Activated CD4-positive, alpha-beta T cell treated with anti-CD3 and anti-CD28 coated beads, Interleukin-2, amount 10 ng/mL, durations not matched to agents 24 days and 14 days (primary cell): ENCODE measurements at regions of chr10 and their contacts with region 1.

Region 1: DNA sequence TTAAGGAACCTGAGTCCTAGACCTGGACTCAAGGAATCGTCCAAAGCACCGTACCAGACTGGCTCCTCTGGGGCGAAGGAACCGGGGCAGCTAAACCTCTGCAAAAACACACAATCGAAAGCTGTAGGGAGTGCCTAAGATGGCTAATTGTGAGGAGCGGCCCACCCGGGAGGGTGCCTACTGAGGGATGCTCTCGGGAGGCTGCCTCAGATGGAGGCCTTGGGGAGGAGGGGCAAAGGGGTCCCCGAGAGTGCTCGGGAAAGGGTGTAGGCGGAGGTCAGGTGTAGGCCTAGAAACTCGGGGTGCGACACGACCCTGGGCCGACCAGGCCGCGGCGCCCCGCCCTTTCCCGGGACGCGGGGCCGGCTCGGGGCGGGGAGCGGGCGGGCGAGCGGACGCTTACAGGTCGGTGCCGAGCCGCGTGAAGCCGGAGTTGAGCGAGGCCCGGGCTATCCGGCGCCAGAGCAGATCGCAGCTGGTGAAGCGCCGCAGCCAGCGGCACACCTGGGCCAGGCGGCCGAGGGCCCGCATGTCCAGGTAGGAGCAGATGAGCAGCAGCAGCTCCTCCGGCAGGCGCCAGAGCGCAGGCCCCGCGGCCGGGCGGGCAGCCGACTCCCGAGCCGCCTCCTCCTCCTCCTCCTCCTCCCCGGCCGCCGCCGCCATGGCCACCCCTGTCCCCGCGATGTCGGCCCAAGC is 844 bp downstream of the FBXW4 start:
- DNase-seq: peak; percentile 93
- H3K4me3 Mint-ChIP-seq: peak overlapping the region; percentile 98
- H3K27ac Mint-ChIP-seq: peak overlapping the region; percentile 99
- H3K4me1 Mint-ChIP-seq: peaks cover 24% of the 10 kb centered on the region
- H3K27me3 Mint-ChIP-seq: no peaks in the 10 kb centered on the region

Region 2: DNA sequence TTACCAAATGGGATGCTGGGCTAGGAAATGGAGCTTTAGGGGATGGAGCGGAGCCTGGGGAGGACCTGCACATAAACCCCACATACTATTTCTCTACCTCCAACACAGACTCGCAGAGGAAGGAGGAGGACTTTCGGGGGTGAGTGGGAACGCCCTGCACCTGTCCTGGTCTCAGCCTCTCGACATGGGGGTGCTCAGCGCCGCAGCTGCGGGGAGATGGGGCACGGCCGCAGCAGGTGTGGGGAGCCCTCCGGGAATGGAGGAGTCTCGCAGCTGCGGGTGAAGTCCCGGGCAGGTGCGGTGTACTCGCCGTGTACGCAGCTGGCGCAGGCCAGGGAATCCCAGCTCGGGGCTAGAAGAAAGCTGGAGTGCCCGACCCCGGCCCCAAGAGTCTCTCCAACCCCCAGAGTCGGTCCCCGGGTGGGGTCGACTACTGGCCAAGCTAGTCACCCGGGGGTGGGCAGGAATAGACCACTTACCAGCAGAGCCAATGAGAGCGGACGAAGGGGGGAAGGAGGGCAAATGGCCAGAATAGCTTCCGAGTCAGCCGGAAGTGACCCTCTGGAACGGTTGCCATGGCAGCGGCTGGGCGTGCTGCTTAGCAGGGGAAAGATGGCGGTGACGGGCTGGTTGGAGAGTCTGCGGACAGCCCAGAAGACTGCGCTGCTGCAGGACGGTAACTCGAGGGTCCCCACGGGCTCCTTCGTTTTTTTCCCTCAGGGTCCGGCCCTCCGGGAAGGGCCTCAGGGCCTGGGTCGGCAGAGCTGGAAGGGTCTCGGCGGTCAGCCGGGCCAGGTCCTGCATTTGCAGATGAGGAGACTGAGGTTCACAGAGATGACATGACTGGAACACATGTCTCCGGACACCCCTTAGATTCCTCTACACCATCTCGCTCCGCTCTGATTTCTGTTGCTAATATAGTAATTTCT is 106.1 kb before region 1 on chr10 and contains the starts of genes DPCD and POLL:
- intact Hi-C with region 1: loop called (anchors 5 kb)
- DNase-seq: peak; percentile 97
- H3K4me3 Mint-ChIP-seq: peak within 1 kb of the TSS; percentile 95
- H3K27ac Mint-ChIP-seq: peak within 1 kb of the TSS; percentile 86
- H3K4me1 Mint-ChIP-seq: peaks cover 18% of the 10 kb centered on the region
- H3K27me3 Mint-ChIP-seq: no peaks in the 10 kb centered on the region
- total RNA-seq, gene DPCD: 5.4 and 6.4 TPM in 2 replicates
- total RNA-seq, gene POLL: 32.2 and 33.8 TPM in 2 replicates

Region 3: GRCh38 chr10:101646364-101646763 is 47.8 kb before region 1 on chr10:
- intact Hi-C with region 1: no loop called
- DNase-seq: no peak
- H3K4me3 Mint-ChIP-seq: no peak overlapping the region
- H3K27ac Mint-ChIP-seq: no peak overlapping the region
- H3K4me1 Mint-ChIP-seq: no peaks in the 10 kb centered on the region
- H3K27me3 Mint-ChIP-seq: no peaks in the 10 kb centered on the region

Region 4: GRCh38 chr10:101830322-101831168 is 136.4 kb after region 1 on chr10:
- intact Hi-C with region 1: loop called (anchors 5 kb)
- DNase-seq: peak; percentile 97
- H3K4me3 Mint-ChIP-seq: peak overlapping the region; percentile 87
- H3K27ac Mint-ChIP-seq: peak overlapping the region; percentile 99
- H3K4me1 Mint-ChIP-seq: peaks cover 49% of the 10 kb centered on the region
- H3K27me3 Mint-ChIP-seq: peaks cover 3% of the 10 kb centered on the region